ENCODE measurements at regions of chr20 and their contacts with region 1.

Region 1: DNA sequence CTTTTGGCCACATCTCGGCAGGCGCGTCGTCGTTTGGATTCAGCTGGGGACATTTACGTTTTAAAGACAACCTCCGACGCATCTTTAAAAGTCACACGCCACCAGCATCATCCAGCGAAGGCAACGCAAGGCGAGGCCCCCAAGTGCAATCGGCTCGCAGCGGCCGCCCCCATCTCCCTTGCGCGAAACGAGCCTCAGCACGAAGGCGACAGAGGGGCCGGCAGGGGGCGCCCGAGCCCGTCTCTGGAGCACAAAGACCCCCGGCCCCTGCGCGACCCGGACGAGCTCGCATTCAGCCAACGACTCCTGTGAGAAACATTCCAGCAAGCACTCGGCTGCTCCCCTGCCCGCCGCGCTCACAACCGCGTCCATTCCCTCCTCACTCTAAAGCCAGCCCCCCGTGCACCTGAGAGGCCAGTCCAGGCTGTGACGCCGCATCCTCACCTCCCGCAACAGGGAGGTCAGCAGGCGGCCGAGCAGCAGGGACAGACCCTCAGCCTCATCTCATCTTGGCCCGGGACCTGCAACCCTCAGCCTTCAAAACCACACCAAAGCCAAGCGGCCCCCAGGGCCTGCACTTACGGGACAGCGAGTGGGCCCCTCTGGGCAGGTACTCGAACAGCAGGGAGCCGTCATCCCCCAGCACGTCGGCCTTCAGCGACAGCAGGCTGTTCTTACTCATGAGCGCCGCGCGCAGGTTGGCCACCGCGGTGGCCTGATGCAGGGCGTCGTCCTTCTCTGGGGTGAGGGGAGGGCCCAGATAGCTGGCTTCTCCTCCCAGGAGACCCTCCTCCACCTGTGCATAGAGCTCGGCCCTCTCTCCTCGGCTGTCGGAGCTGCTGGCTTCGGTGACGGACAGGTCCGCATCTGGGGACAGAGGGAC is 35.8 kb downstream of the SLC2A4RG start:
- DNase-seq: peak; percentile 95
- H3K4me3 ChIP-seq: peak overlapping the region; percentile 28 to 47; a peak in 3 of 4 replicates
- H3K27ac ChIP-seq: no peak overlapping the region
- H3K4me1 ChIP-seq: peaks cover 0 to 5% of the 10 kb centered on the region in 2 experiments; a peak in 1 of 4 replicates
- H3K27me3 ChIP-seq: no peaks in the 10 kb centered on the region
- CTCF ChIP-seq: peak; percentile 77
- EP300 ChIP-seq: no peak
- RAD21 ChIP-seq: peak; percentile 72

Region 2: DNA sequence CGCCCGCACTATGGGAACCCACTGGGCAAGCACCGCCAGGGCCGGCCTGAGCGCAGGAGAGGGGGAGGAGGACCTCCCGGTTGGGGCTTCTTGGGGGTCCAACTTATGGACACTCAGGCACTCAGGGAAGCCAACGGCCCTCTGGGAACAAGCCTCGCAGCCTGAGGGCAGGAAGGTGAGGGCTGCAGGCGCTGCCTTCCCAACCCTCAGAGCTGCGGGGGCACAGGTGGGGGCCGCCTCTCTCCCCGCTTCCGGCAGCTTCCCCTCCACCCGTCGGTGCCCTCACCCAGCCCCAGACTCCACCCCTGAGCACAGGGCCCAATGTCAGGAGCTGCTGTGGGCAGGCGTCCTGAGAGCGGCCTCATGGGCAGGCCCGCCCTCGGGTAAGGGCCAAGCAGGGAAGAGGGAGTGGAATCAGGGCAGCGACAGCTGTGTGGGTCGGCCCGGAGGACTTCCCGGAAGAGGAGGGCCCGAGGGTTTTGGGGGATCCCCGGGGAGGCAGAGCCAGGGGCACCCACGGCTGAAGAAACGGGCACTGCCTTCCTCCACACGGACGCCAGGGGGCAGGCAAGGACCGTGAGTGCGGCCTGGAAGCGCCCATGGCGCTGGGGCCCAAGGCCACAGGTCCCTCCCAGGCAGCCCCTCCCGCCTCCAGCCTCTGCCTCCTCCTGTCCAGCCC is 237.7 kb before region 1 on chr20:
- CTCF ChIA-PET with region 1: interaction called, 24 read pairs
- POLR2A ChIA-PET with region 1: no interaction called
- DNase-seq: peak; percentile 97
- H3K4me3 ChIP-seq: peak overlapping the region in 1 of 2 experiments; percentile 29; a peak in 2 of 4 replicates
- H3K27ac ChIP-seq: peak overlapping the region in 1 of 2 experiments; percentile 76; a peak in 2 of 4 replicates
- H3K4me1 ChIP-seq: peaks cover 0 to 32% of the 10 kb centered on the region in 2 experiments; a peak in 1 of 4 replicates
- H3K27me3 ChIP-seq: no peaks in the 10 kb centered on the region
- CTCF ChIP-seq: peak; percentile 81
- EP300 ChIP-seq: no peak
- RAD21 ChIP-seq: peak; percentile 93

Region 3: DNA sequence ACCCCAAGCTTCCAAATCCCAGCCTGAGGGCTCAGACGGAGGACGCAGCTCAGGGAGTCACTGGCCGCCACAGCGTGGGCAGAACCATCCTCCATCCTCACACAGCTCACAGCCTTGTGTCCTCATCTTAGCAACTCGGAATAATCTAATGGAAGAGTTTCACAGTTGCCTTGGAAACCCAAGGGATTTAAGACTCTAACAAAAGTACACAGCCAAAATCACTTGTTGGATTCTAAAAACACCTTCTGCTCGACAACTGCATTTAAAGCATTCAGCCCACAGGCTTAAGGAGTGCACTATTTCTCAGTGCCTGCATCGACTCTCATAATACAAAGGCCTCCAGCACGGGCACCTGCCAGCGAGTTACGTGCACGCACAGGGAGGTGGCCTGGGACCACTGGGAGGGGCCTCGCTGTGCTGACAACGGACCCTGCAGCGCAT is 10.4 kb after region 1 on chr20:
- CTCF ChIA-PET with region 1: interaction called, 103 read pairs
- POLR2A ChIA-PET with region 1: no interaction called
- DNase-seq: no peak
- H3K4me3 ChIP-seq: no peak overlapping the region
- H3K27ac ChIP-seq: no peak overlapping the region
- H3K4me1 ChIP-seq: no peaks in the 10 kb centered on the region
- H3K27me3 ChIP-seq: no peaks in the 10 kb centered on the region
- CTCF ChIP-seq: no peak
- EP300 ChIP-seq: no peak
- RAD21 ChIP-seq: no peak

Region 4: GRCh38 chr20:63858393-63859165 is 83.2 kb after region 1 on chr20:
- CTCF ChIA-PET with region 1: interaction called, 30 read pairs
- POLR2A ChIA-PET with region 1: no interaction called
- DNase-seq: peak; percentile 70
- H3K4me3 ChIP-seq: no peak overlapping the region
- H3K27ac ChIP-seq: peak overlapping the region in 1 of 2 experiments; percentile 76; a peak in 2 of 4 replicates
- H3K4me1 ChIP-seq: peaks cover 0 to 53% of the 10 kb centered on the region in 2 experiments; a peak in 1 of 4 replicates
- H3K27me3 ChIP-seq: no peaks in the 10 kb centered on the region
- CTCF ChIP-seq: no peak
- EP300 ChIP-seq: no peak
- RAD21 ChIP-seq: peak; percentile 42; the same call in 1 of the 2 replicates

Region 5: DNA sequence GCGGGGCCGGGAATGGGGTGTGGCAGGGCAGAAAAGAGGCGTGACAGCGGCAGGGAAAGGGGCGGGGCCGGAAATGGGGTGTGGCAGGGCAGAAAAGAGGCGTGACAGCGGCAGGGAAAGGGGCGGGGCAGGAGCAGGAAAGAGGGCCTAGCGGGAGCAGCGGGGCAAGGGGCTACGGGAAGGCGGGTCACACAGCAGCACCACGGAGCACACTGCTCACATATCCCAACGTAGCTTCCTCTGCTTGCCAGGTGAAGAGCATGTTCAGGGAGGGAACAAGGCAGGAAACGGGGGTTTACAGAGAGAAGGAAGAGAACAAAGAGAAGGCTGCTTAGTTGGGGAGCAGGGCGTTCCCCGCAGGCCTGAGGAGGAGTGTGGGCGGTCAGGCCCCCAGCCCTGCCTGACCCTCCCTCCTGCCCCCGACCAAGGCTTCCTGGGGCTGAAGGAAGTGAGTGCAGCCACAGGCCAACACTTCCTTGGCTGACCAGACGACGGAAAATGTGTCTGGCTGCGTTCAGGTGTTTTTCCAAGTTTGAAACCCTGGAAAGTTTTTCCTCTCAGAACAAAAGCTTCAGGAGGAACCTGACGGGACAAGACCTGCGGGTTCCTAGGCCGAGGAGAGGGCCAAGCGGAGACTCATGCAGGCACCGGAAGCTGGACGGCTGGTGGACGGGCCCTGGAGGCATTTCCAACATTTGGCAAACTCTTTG is 167.1 kb after region 1 on chr20:
- CTCF ChIA-PET with region 1: interaction called, 11 read pairs
- POLR2A ChIA-PET with region 1: no interaction called
- DNase-seq: no peak
- H3K4me3 ChIP-seq: no peak overlapping the region
- H3K27ac ChIP-seq: no peak overlapping the region; a peak in 1 of 4 replicates
- H3K4me1 ChIP-seq: no peaks in the 10 kb centered on the region; a peak in 1 of 4 replicates
- H3K27me3 ChIP-seq: no peaks in the 10 kb centered on the region
- CTCF ChIP-seq: no peak
- EP300 ChIP-seq: no peak
- RAD21 ChIP-seq: no peak

Region 6: GRCh38 chr20:63973636-63974402 is 198.5 kb after region 1 on chr20:
- CTCF ChIA-PET with region 1: interaction called, 44 read pairs
- POLR2A ChIA-PET with region 1: no interaction called
- DNase-seq: peak; percentile 95
- H3K4me3 ChIP-seq: peak overlapping the region; percentile 7 to 12; a peak in 2 of 4 replicates
- H3K27ac ChIP-seq: no peak overlapping the region
- H3K4me1 ChIP-seq: peaks cover 5 to 17% of the 10 kb centered on the region in 2 experiments; a peak in 3 of 4 replicates
- H3K27me3 ChIP-seq: no peaks in the 10 kb centered on the region
- CTCF ChIP-seq: peak; percentile 98
- EP300 ChIP-seq: no peak
- RAD21 ChIP-seq: peak; percentile 91

Measured in SK-N-SH (cell line).